ENCODE measurements at regions of chr16 and their contacts with region 1.

Region 1: GRCh38 chr16:10509534-10510025 is 70.8 kb downstream of the EMP2 start:
- ATAC-seq: peak; percentile 97 to 100 (median 99)
- H3K4me3 ChIP-seq: no peak overlapping the region
- H3K27ac ChIP-seq: no peak overlapping the region
- H3K4me1 ChIP-seq: peaks cover 0 to 4% of the 10 kb centered on the region in 2 donors

Region 2: GRCh38 chr16:9134739-9135138 is 1374.8 kb before region 1 on chr16:
- in situ Hi-C with region 1: loop called in 2 of 9 experiments (anchors 25 kb)
- ATAC-seq: peak; percentile 54 to 87 (median 74)
- H3K4me3 ChIP-seq: no peak overlapping the region
- H3K27ac ChIP-seq: no peak overlapping the region
- H3K4me1 ChIP-seq: peaks cover 0 to 2% of the 10 kb centered on the region in 2 donors

Region 3: GRCh38 chr16:9258423-9259051 is 1251.0 kb before region 1 on chr16:
- in situ Hi-C with region 1: loop called in 2 of 9 experiments (anchors 25 kb)
- ATAC-seq: peak in 7 of 8 experiments; percentile 32 to 85 (median 79)
- H3K4me3 ChIP-seq: no peak overlapping the region
- H3K27ac ChIP-seq: no peak overlapping the region
- H3K4me1 ChIP-seq: peaks cover 7 to 12% of the 10 kb centered on the region in 2 donors

Region 4: DNA sequence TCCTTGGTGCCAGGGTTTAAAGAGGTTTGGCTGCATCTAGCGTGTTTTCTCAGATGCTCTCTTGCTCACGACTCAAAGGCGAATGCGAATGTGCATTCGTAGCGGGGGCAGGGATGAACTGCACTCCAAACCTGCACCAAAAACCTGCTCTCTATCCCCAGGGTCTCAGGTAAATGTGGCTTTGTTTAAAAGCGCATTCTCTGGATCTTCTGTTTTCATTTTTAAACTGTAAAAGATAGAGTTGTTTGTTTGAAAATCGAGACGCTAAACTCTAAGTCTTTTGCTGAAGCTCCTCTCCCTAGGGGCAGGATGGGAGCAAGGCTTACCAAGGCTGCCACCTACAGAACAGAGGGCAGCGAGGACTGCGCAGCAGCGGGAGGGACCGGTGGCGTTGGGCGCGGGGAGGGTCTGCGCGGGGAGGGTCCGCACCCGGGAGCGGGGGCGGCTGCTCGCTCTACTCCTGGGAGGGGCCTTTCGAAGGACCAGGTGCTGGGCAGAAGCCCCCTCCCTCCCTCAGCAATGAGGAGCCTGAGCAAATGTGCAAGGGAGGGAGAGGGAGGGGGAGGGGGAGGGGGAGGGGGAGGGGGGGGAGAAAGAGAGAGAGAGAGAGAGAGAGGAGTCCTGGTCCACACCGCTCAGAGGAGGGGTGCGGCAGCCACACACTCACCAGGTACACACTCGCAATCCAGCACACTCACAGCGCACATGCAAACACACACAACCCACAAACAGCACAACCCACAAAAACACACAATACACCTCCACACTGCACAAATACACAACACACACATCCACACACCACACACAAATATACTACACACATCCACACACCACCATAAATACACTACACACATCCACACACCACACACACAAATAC is 470.1 kb before region 1 on chr16:
- in situ Hi-C with region 1: no loop called
- ATAC-seq: peak in 6 of 8 experiments; percentile 70 to 98 (median 96)
- H3K4me3 ChIP-seq: peak overlapping the region; percentile 13 to 47 (median 22)
- H3K27ac ChIP-seq: no peak overlapping the region
- H3K4me1 ChIP-seq: no peaks in the 10 kb centered on the region

Region 5: GRCh38 chr16:10266809-10267208 is 242.8 kb before region 1 on chr16:
- in situ Hi-C with region 1: loop called in 1 of 9 experiments (anchors 10 kb)
- ATAC-seq: no peak
- H3K4me3 ChIP-seq: no peak overlapping the region
- H3K27ac ChIP-seq: no peak overlapping the region
- H3K4me1 ChIP-seq: no peaks in the 10 kb centered on the region

Region 6: DNA sequence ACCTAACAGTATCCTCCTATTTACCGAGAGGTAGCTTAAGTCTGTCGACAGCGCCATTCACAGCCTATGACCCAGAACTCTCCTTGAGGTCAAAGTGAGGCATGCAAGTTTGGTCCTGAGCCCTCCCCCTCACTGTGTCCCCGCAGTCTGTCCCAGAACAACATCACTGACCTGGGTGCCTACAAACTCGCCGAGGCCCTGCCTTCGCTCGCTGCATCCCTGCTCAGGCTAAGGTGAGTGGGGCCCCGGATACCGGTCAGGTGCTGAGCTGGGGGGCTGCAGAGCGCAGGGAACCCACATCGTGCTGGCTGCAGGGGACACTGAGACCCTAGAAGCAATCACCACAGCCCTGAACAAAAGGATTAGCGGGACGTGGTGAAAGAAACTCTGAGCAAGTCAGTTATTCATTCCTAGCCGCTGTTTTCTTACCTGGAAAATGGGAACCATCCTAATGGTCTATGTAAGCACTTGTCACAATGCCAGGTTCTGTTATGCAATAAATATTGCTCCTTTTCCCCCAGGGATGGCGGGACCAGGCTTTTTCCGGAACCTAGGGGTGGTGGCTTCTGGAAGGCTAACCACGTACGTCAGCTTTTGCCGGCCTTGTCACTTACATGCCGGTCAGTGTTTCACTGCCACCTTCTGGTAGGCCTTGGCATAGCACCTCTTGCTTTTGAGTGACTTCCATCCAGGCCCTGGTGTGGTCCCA is 408.9 kb after region 1 on chr16:
- in situ Hi-C with region 1: loop called in 2 of 9 experiments (anchors 10 to 25 kb)
- ATAC-seq: peak; percentile 83 to 97 (median 90)
- H3K4me3 ChIP-seq: no peak overlapping the region
- H3K27ac ChIP-seq: no peak overlapping the region
- H3K4me1 ChIP-seq: peaks cover 0 to 3% of the 10 kb centered on the region in 2 donors

Region 7: GRCh38 chr16:10944249-10945064 is 434.9 kb after region 1 on chr16 and contains the start of gene CLEC16A:
- in situ Hi-C with region 1: no loop called
- ATAC-seq: peak; percentile 68 to 83 (median 78)
- H3K4me3 ChIP-seq: peak within 1 kb of the TSS; percentile 71 to 87 (median 80)
- H3K27ac ChIP-seq: peak within 1 kb of the TSS; percentile 7 to 57
- H3K4me1 ChIP-seq: peaks cover 23 to 30% of the 10 kb centered on the region in 2 donors
- total RNA-seq, gene CLEC16A: 13.4 to 75.0 (median 17.2) TPM

Region 8: GRCh38 chr16:10961231-10961630 is 451.7 kb after region 1 on chr16:
- in situ Hi-C with region 1: no loop called
- ATAC-seq: peak in 3 of 8 experiments; percentile 30 to 69 (median 52)
- H3K4me3 ChIP-seq: no peak overlapping the region
- H3K27ac ChIP-seq: no peak overlapping the region
- H3K4me1 ChIP-seq: peaks cover 3 to 4% of the 10 kb centered on the region in 2 donors